ENCODE measurements at regions of chr16 and their contacts with region 1.

Region 1: DNA sequence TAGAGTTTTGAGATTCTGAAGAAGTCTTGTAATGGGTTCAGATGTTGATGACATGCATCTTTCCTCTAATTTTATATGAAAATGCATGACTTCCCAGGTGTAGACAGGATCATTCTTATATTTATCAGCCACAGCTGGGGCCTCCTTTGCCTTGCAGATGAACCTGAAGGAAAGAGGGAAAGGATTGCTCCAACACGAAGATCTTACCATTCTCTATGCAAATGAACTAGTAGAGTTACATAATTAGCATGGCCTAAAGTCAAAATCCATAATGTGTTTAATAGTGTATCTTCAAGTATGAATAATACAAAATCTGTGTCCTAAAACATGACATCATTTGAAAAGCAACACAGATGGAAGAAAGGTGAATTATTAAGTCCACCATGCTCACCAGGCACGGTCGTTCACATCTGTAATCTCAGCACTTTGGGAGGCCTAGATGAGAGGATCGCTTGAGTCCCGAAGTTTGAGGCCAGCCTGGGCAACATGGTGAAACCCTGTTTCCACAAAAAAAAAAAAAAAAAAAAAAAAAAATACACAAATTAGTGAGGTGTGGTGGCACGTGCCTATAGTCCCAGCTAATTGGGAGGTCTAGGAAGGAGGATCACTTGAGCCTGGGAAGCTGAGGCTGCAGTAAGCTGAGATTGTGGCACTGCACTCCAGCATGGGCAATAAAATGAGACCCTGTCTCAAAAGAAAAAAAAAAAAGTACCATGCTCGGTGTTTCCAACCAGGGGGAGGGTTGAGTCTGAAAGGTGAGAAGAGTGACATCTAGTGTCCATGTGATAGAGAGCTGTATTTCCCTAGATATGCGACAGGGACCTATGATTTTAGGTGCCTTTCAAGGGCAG is 6.3 kb downstream of the VWA3A start:
- DNase-seq: no peak
- ATAC-seq: peak; percentile 89
- H3K4me3 Mint-ChIP-seq: no peak overlapping the region
- H3K27ac Mint-ChIP-seq: no peak overlapping the region
- H3K4me1 Mint-ChIP-seq: peaks cover 5% of the 10 kb centered on the region
- H3K27me3 Mint-ChIP-seq: peaks cover 17% of the 10 kb centered on the region

Region 2: DNA sequence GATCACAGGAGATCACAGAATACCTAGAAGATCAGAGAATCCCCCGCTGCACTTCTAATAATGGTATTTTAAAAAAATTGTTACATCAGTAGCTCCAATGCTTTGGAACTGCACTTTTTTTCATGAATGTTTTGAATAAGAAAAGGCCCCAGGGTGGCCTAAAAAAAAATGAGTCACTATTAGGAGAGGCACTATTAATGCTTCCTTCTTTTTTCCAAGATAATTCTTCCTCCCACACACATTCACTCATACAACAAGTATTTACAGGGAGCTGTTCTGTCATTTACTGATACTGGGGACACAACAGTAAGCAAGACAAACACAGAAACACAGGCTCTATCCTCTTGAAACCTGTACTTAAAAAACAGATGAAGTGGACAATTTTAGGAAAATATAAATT is 97.0 kb before region 1 on chr16:
- CTCF ChIA-PET with region 1: interaction called, 23 read pairs
- DNase-seq: no peak
- ATAC-seq: no peak
- H3K4me3 Mint-ChIP-seq: no peak overlapping the region
- H3K27ac Mint-ChIP-seq: no peak overlapping the region
- H3K4me1 Mint-ChIP-seq: peaks cover 10% of the 10 kb centered on the region
- H3K27me3 Mint-ChIP-seq: no peaks in the 10 kb centered on the region

Region 3: DNA sequence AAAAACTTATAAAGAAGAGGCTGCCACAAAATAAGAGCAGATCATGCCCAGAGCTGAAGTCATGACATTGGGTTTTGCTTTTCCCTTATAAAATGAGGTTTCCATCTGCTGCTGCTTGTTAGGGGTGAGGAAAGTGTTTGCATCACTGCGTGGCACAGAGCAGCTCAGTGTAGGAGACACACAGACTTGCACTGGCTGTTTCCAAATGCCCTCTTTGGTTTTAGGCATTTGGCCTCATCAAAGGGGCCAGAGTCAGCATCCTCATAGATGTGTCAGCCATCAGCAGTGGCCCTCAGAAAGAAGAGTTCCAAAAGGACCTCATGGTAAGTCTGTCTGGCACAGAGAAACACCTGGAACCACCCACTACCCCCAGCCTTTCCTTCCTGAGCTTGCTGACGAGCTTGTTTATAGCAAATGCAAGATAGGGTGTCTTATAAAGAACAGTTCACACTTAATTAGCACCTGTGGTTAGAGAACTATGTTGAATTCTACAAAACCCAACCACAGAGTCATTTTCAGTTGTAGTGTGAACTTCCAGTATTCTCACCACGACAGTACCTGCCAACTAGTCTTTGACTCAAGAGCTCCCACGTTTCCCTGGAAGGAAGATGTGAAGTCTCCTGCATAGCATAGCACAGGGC is 10.7 kb after region 1 on chr16:
- CTCF ChIA-PET with region 1: interaction called, 10 read pairs
- DNase-seq: no peak
- ATAC-seq: no peak
- H3K4me3 Mint-ChIP-seq: no peak overlapping the region
- H3K27ac Mint-ChIP-seq: no peak overlapping the region
- H3K4me1 Mint-ChIP-seq: peaks cover 8% of the 10 kb centered on the region
- H3K27me3 Mint-ChIP-seq: peaks cover 12% of the 10 kb centered on the region

Measured in activated CD8-positive, alpha-beta memory T cell treated with anti-CD3 and anti-CD28 coated beads, Interleukin-2, amount 10 ng/mL, durations not matched to agents 7 days and 5 days (primary cell).